ENCODE measurements at regions of chr5 and their contacts with region 1.

Region 1: GRCh38 chr5:75511435-75512384 is at the starts of genes CERT1 and POLK:
- DNase-seq: peak; percentile 99
- H3K4me3 ChIP-seq: peak within 1 kb of the TSS; percentile 71 to 94 (median 89)
- H3K27ac ChIP-seq: peak within 1 kb of the TSS; percentile 74 to 96 (median 94)
- H3K4me1 ChIP-seq: peaks cover 20 to 88% (median 62%) of the 10 kb centered on the region in 6 donors
- H3K27me3 ChIP-seq: no peaks in the 10 kb centered on the region
- CTCF ChIP-seq: peak in 1 of 11 experiments; percentile 28
- POLR2A ChIP-seq: peak in 2 of 3 donors; percentile 48 to 56
- total RNA-seq, gene CERT1: 50.1 to 71.1 (median 52.3) TPM
- total RNA-seq, gene POLK: 33.2 to 56.6 (median 38.4) TPM

Region 2: GRCh38 chr5:75460942-75461610 is 50.6 kb before region 1 on chr5:
- intact Hi-C with region 1: no loop called
- DNase-seq: no peak
- H3K4me3 ChIP-seq: no peak overlapping the region
- H3K27ac ChIP-seq: peak overlapping the region in 2 of 8 donors; percentile 17 to 32
- H3K4me1 ChIP-seq: peaks cover 4 to 52% (median 28%) of the 10 kb centered on the region in 6 donors
- H3K27me3 ChIP-seq: no peaks in the 10 kb centered on the region
- CTCF ChIP-seq: no peak
- POLR2A ChIP-seq: no peak

Region 3: GRCh38 chr5:75681125-75681830 is 169.6 kb after region 1 on chr5:
- intact Hi-C with region 1: loop called (anchors 10 kb)
- DNase-seq: no peak
- H3K4me3 ChIP-seq: no peak overlapping the region
- H3K27ac ChIP-seq: peak overlapping the region in 4 of 8 donors; percentile 29 to 41 (median 32)
- H3K4me1 ChIP-seq: peaks cover 0 to 33% (median 13%) of the 10 kb centered on the region in 6 donors
- H3K27me3 ChIP-seq: no peaks in the 10 kb centered on the region
- CTCF ChIP-seq: peak; percentile 53 to 89 (median 78)
- POLR2A ChIP-seq: no peak

Region 4: DNA sequence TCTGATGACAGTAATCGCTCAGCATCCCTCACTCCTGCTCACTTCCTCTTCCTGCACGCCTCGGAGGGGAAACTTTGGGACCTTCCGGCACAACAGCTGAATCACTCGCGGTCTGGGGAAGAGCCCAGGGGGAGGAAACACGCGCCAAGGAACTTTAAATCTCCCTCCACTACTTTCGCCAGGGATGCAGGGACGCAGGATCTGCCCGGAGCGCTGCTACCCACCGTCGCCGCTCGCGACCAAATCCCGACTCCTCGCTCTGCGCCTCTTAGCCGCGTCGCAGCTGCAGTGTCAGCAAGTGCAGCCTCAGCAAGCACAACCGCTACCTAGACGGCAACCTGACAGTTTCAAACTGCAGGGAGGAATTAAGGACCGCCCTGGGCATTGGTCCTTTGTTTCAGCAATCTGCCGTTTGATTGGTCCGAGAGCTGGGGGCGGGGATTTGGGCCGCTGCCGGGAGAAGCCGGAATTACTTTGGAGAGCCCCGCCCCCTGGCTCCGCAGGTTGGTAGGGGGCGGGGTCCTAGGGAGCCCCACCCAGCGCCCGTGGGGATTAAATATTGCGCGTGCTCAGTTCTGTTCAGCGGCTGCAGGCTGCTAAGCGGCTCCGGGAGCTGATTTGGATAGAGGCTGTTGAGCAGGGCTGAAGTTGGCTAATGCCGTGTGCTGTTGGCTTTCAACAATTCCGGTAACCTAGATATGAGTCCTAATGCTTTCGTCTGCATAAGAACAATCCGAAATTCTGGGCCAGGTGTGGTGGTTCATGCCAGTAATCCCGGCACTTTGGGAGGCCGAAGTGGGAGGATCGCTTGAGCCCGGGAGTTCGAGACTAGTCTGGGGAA is 205.6 kb after region 1 on chr5 and contains the start of gene POC5:
- intact Hi-C with region 1: no loop called
- DNase-seq: peak; percentile 98
- H3K4me3 ChIP-seq: peak within 1 kb of the TSS; percentile 80 to 97 (median 91)
- H3K27ac ChIP-seq: peak within 1 kb of the TSS; percentile 79 to 97 (median 94)
- H3K4me1 ChIP-seq: peaks cover 12 to 55% (median 32%) of the 10 kb centered on the region in 6 donors
- H3K27me3 ChIP-seq: no peaks in the 10 kb centered on the region
- CTCF ChIP-seq: peak in 4 of 11 experiments; percentile 9 to 50 (median 32)
- POLR2A ChIP-seq: peak in 1 of 3 donors; percentile 55
- total RNA-seq, gene POC5: 11.8 to 36.0 (median 17.4) TPM